ENCODE measurements at regions of chr3 and their contacts with region 1.

Region 1: DNA sequence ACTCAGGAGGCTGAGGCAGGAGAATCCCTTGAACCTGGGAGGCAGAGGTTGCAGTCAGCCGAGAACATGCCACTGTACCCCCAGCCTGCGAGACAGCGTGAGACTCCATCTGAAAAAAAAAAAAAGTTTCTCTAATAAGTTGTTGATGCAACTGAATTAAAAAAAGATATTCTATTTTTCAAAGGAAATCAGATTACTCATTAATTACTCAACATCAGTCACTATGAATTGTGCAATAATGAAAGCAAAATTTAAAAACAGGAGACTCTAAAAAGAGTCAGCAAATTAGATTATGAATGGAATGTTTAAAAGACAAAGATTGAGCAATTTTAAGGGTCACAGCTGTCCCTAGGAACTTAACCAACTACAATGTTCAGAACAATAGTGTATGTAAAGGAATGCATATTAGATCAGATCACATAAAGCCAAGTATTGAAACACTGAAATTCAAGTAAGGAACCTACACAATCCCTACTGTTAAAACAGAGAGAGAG is 60.2 kb upstream of the SLC4A7 start:
- DNase-seq: no peak
- H3K4me3 Mint-ChIP-seq: no peak overlapping the region
- H3K27ac Mint-ChIP-seq: peak overlapping the region; percentile 74
- H3K4me1 Mint-ChIP-seq: peaks cover 10% of the 10 kb centered on the region
- H3K27me3 Mint-ChIP-seq: peaks cover 2% of the 10 kb centered on the region

Region 2: DNA sequence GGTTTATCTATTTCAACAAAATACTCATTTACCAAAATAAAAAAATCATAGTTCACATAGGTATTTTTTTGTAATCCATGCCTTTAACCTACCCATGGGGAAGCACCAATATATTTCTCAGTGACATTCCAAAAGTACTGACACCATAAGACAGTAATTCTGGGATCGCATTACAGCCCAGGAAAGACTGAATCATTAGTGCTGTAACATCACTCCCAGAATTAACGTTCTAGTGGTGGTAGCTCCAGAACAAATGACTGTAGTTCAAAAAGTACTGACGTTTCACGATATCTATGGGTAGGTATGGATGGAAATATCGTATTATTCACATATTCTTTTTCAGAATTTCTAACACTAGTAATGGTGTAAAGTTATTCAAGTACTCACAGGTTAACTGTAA is 121.0 kb before region 1 on chr3:
- CTCF ChIA-PET with region 1: no interaction called
- POLR2A ChIA-PET with region 1: no interaction called
- intact Hi-C with region 1: no loop called
- DNase-seq: no peak
- H3K4me3 Mint-ChIP-seq: no peak overlapping the region
- H3K27ac Mint-ChIP-seq: no peak overlapping the region
- H3K4me1 Mint-ChIP-seq: peaks cover 17% of the 10 kb centered on the region
- H3K27me3 Mint-ChIP-seq: no peaks in the 10 kb centered on the region

Region 3: DNA sequence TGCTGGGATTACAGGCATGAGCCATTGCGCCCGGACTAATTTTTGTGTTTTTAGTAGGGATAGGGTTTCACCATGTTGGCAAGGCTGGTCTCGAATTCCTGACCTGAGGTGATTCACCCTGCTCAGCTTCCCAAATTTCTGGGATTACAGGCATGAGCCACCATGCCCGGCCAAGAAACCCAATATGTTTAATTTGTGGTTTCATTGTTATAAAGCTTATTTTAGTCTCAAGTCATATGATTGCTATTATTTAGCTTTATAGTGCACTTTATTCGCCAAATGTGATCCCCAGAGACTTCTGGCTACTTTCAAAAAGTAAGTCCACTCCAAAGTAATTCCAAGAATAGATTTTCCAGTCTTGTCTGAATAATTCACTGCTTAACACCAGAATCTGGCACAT is 40.9 kb before region 1 on chr3:
- CTCF ChIA-PET with region 1: no interaction called
- POLR2A ChIA-PET with region 1: no interaction called
- intact Hi-C with region 1: no loop called
- DNase-seq: no peak
- H3K4me3 Mint-ChIP-seq: no peak overlapping the region
- H3K27ac Mint-ChIP-seq: no peak overlapping the region
- H3K4me1 Mint-ChIP-seq: peaks cover 2% of the 10 kb centered on the region
- H3K27me3 Mint-ChIP-seq: no peaks in the 10 kb centered on the region

Region 4: DNA sequence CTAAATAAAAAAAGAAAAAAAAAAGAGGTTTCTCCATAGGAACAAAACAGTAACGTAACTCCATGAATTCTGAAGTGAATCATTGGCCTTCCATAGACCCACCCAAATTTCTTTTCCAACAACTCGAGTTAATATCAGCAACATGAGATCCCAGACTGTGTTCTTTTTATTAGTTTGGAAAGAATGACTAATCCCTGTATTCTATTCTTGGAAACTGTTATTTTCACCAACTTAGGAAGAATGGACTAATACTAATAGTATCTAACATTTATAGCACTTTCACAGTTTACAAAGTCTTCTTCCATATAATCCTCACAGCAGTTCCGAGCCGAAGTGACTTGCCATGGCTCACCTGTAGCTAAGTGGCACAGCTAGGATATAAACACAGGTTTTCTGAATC is 12.5 kb after region 1 on chr3:
- CTCF ChIA-PET with region 1: no interaction called
- POLR2A ChIA-PET with region 1: no interaction called
- intact Hi-C with region 1: no loop called
- DNase-seq: no peak
- H3K4me3 Mint-ChIP-seq: no peak overlapping the region
- H3K27ac Mint-ChIP-seq: no peak overlapping the region
- H3K4me1 Mint-ChIP-seq: no peaks in the 10 kb centered on the region
- H3K27me3 Mint-ChIP-seq: no peaks in the 10 kb centered on the region

Region 5: DNA sequence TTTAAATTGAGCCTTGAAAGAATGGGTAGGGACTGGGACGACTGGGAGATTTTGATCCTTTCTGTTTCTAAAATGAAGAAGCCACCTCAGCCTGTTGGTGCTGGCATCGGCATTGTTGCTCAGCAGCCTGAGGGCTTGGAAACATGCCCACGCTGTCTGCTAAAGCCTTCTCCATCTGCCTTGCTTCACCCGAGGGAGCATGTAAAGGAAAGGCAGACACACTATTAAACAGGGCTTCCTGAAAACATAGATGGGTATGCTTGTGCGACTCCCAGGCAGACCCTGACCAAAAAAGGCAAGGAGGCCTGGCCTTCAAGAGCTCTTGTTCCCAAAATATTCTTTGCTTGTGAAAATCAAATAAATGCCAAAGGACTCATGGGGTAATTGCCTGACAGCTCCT is 24.0 kb after region 1 on chr3:
- CTCF ChIA-PET with region 1: no interaction called
- POLR2A ChIA-PET with region 1: no interaction called
- intact Hi-C with region 1: no loop called
- DNase-seq: no peak
- H3K4me3 Mint-ChIP-seq: no peak overlapping the region
- H3K27ac Mint-ChIP-seq: no peak overlapping the region
- H3K4me1 Mint-ChIP-seq: no peaks in the 10 kb centered on the region
- H3K27me3 Mint-ChIP-seq: no peaks in the 10 kb centered on the region

Region 6: DNA sequence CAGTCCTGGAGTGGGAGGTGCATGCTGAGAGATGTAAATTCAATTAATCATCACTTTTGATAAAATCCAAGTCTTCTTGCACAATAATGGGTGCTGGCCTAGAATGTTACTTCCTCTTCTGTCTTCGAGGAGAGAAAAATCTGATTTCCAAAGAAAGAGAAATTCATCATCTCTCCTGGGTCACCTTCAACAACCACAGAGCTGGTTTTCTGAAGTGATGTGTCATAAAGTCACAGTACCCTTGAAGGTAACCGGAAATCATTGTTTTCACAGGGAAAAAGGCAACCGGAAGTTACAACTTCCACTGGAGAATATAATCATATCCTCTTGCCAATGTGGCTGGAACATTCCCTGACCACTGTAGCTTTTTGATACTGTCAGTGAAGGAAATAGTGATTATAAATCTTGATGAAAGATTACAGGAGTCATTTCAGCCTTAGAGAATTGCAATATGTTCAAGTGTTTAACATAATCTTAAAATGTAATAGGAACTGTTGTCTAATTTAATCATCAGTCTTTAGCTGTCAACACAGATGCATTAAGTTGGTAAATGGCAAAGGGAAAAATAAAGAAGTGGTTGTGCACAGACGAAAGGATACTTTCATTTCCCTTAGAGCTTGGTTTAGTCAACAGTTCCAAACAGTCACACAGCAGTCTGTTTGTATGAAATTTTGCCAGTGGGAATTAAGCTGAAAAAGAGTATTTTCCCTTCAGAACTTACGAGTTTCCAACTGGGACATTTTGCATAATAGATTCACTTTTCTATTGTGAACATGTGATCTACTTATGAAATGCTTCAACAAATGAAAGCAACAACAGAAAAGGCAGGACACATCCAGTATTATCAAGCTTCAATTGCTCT is 46.2 kb after region 1 on chr3:
- CTCF ChIA-PET with region 1: no interaction called
- POLR2A ChIA-PET with region 1: no interaction called
- intact Hi-C with region 1: loop called (anchors 2 kb)
- DNase-seq: peak; percentile 13
- H3K4me3 Mint-ChIP-seq: no peak overlapping the region
- H3K27ac Mint-ChIP-seq: peak overlapping the region; percentile 62
- H3K4me1 Mint-ChIP-seq: peaks cover 25% of the 10 kb centered on the region
- H3K27me3 Mint-ChIP-seq: no peaks in the 10 kb centered on the region